Left lung (tissue), 14 donors: ENCODE measurements at regions of chr5 and their contacts with region 1.

Region 1: GRCh38 chr5:149381987-149382340 is 2.9 kb upstream of the IL17B start:
- DNase-seq: peak; percentile 76 to 90 (median 80)
- ATAC-seq: peak; percentile 87
- H3K4me3 ChIP-seq: no peak overlapping the region
- H3K27ac ChIP-seq: no peak overlapping the region
- H3K4me1 ChIP-seq: peaks cover 16 to 27% of the 10 kb centered on the region in 2 donors
- H3K27me3 ChIP-seq: no peaks in the 10 kb centered on the region
- CTCF ChIP-seq: peak; percentile 88 to 95

Region 2: DNA sequence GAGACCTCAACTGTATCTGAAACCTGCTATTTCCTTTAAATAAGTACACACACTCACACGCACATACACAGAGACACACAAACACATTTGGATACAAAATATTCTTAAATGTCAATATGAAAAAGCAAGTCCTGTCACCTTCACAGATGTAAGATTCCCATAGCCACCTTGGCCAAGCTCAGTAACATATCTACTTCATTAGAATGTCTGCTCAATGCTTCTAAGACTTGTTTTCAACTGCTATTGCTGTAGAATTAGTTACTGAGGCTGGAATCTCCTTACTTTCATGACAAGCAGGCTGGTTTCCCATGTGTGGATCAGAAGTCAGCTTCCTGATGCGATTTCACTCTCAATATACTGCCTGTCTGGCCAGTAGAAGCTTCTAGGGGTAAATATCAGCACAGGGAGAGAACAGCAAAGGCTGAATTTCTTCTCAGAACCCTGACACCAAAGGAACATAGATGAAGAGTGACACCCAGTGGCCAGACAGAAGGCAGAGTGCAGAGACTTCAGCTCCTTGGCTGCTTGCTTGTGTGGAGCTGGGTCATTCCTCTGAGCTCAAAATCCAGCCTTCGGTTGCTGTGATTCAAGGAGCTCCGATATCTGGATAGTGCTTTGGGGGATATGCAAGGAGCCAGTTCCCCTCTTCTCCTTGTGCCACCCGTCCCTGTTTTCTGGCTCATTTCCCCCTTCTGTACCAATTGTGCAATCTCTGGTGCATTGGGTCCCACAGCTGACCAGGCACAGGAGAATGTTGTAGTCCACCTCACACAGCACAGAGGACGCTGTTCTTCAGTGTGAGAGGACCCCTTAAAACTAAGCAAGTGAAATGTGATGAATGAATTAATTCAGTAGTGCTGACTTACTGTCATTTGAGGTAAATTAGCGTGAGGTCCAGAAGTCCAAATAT is 267.3 kb before region 1 on chr5:
- intact Hi-C with region 1: no loop called
- DNase-seq: peak in 3 of 4 donors; percentile 47 to 81 (median 69)
- ATAC-seq: peak; percentile 99
- H3K4me3 ChIP-seq: no peak overlapping the region
- H3K27ac ChIP-seq: no peak overlapping the region
- H3K4me1 ChIP-seq: peaks cover 0 to 13% of the 10 kb centered on the region in 2 donors
- H3K27me3 ChIP-seq: no peaks in the 10 kb centered on the region
- CTCF ChIP-seq: peak; percentile 49 to 72

Region 3: GRCh38 chr5:149434162-149435014 is 52.4 kb after region 1 on chr5:
- intact Hi-C with region 1: loop called (anchors 5 kb)
- DNase-seq: peak in 1 of 4 donors; percentile 72
- ATAC-seq: peak; percentile 67
- H3K4me3 ChIP-seq: no peak overlapping the region
- H3K27ac ChIP-seq: no peak overlapping the region
- H3K4me1 ChIP-seq: peaks cover 6 to 21% of the 10 kb centered on the region in 2 donors
- H3K27me3 ChIP-seq: no peaks in the 10 kb centered on the region
- CTCF ChIP-seq: peak; percentile 76 to 80

Region 4: DNA sequence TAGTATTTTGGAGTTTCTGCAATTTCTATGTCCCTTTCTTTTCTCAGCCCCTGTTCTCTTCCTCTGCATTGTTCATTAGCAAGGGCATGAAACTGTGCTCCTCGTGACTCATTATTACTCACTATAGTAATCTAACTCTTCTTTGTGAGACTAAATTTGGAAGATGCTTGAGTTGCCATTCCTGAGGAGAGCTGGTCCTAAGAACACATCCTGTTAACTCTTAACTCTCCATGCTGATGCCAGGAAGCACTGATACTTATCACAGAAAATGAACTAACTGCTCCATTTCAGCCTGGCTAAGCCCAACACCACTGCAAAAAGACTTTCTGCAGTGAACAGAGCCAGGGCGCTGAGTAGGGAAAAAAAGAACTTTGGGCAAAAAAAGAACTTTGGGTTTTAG is 179.9 kb after region 1 on chr5:
- intact Hi-C with region 1: loop called in 1 of 2 experiments (anchors 5 kb)
- DNase-seq: peak in 2 of 4 donors; percentile 43 to 65
- ATAC-seq: peak; percentile 88
- H3K4me3 ChIP-seq: no peak overlapping the region
- H3K27ac ChIP-seq: peak overlapping the region; percentile 60 to 88
- H3K4me1 ChIP-seq: peaks cover 26 to 49% of the 10 kb centered on the region in 2 donors
- H3K27me3 ChIP-seq: no peaks in the 10 kb centered on the region
- CTCF ChIP-seq: no peak

Region 5: GRCh38 chr5:149667084-149667828 is 285.3 kb after region 1 on chr5:
- intact Hi-C with region 1: no loop called
- DNase-seq: no peak
- ATAC-seq: peak; percentile 78
- H3K4me3 ChIP-seq: no peak overlapping the region
- H3K27ac ChIP-seq: no peak overlapping the region
- H3K4me1 ChIP-seq: peaks cover 0 to 19% of the 10 kb centered on the region in 2 donors
- H3K27me3 ChIP-seq: no peaks in the 10 kb centered on the region
- CTCF ChIP-seq: peak; percentile 74 to 86